Activated T-helper 1 cell treated with anti-CD3 and anti-CD28 coated beads, Interleukin-12 subunit alpha, Interleukin-12 subunit beta, Interleukin-2, Interleukin-4 antibody, amounts not matched to agents 30 ng/mL and 10 ng/mL and 1 ng/mL, durations not matched to agents 14 hours and 24 hours and 36 hours (primary cell): ENCODE measurements at regions of chr6 and their contacts with region 1.

Region 1: DNA sequence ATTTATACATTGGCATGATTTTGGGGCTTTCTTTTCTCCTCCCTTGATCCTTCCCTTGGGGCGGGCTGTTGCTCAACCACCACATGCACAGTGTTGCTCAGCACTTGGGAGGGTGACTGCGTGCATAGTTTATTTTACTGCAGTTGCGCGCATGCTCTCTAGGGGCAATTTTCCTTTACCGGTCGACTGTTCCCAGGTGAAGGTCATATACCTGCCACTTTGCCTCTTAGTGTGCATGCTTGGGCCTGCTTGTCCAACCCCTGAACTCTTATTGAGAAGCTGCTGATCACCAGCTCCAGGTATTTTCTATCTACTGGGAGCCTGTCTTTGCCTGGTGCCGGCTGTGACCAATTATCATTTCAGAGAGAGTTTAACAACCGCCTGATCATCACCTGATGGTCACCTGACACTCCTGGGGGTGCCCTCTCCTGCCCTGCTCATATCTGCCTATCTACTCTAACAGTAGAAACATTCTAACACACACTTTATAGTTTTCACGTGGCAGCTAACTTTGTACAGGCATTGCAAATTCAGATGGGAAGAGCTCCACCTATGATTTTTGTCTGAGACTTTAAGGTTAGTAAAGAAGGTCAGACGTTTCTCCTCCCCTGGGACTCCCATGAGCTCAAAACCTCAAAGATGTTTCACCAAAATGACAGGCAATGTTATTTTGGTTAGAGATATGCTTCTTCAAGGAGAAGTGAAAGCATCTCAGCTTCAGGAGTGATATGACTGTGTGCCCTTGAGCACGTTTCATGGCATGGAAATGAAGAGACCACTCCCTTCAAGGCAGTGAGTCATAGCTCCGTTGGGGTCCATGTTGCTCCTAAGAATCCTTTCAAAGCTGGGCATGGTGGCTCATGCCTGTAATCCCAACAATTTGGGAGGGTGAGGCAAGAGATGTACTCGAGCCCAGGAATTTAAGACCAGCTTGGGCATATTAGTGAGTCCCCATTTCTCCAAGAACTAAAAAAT is 227.5 kb upstream of the MYLIP start:
- DNase-seq: peak; percentile 44
- H3K4me3 Mint-ChIP-seq: peak overlapping the region; percentile 50
- H3K27ac Mint-ChIP-seq: peak overlapping the region; percentile 87
- H3K4me1 Mint-ChIP-seq: peaks cover 42% of the 10 kb centered on the region
- H3K27me3 Mint-ChIP-seq: no peaks in the 10 kb centered on the region

Region 2: GRCh38 chr6:15879382-15880261 is 21.8 kb before region 1 on chr6:
- intact Hi-C with region 1: loop called (anchors 1 kb)
- DNase-seq: no peak
- H3K4me3 Mint-ChIP-seq: peak overlapping the region; percentile 53
- H3K27ac Mint-ChIP-seq: peak overlapping the region; percentile 63
- H3K4me1 Mint-ChIP-seq: peaks cover 34% of the 10 kb centered on the region
- H3K27me3 Mint-ChIP-seq: no peaks in the 10 kb centered on the region

Region 3: DNA sequence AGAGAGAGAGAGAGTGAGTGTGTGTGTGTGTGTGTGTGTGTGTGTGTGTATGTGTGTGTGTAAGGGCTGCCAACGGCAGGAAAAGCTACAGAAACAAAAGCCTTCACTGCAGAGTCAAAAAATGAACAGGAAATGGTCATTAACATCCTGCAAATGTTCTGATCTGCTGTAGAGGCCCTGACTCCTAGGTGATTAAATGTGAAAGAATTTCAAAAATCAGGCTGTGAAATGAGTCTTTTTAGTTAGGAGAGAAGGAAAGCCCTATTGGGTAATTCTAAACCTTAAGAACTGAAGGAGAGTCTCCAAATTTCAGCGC is 61.0 kb after region 1 on chr6:
- intact Hi-C with region 1: loop called (anchors 1 kb)
- DNase-seq: peak; percentile 16
- H3K4me3 Mint-ChIP-seq: no peak overlapping the region
- H3K27ac Mint-ChIP-seq: peak overlapping the region; percentile 87
- H3K4me1 Mint-ChIP-seq: peaks cover 33% of the 10 kb centered on the region
- H3K27me3 Mint-ChIP-seq: no peaks in the 10 kb centered on the region

Region 4: DNA sequence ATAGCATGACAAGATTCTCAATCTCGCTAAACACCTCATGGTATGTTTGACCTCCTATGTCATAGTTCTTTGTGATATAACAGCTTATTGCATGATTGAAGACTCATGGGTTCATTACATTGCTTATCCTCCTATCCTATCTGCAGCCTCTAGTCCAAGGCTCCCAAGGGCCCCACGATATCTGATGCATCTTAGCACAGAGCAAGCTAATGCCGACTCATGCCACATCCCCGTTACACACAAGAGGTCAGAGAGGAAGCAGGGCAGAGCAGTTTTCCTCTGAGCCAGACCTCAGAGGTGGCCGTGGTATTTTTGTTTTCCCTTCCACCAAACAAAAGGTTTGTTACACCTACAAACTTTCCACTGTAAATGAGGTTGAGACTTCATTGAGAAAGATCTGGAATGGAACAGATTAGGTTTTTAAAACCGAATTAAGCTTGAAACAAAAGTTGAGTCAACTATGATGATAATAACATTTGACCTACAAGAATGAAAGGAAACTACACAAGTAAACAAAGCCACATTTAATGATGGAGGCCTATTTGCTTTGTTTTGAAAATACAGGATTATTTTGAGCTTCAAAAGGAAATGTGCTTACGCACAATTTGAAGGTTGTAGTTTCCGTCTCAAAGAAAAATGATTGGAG is 93.5 kb after region 1 on chr6:
- intact Hi-C with region 1: loop called (anchors 1 kb)
- DNase-seq: no peak
- H3K4me3 Mint-ChIP-seq: no peak overlapping the region
- H3K27ac Mint-ChIP-seq: peak overlapping the region; percentile 81
- H3K4me1 Mint-ChIP-seq: peaks cover 22% of the 10 kb centered on the region
- H3K27me3 Mint-ChIP-seq: peaks cover 8% of the 10 kb centered on the region